ENCODE measurements at regions of chr16 and their contacts with region 1.

Region 1: DNA sequence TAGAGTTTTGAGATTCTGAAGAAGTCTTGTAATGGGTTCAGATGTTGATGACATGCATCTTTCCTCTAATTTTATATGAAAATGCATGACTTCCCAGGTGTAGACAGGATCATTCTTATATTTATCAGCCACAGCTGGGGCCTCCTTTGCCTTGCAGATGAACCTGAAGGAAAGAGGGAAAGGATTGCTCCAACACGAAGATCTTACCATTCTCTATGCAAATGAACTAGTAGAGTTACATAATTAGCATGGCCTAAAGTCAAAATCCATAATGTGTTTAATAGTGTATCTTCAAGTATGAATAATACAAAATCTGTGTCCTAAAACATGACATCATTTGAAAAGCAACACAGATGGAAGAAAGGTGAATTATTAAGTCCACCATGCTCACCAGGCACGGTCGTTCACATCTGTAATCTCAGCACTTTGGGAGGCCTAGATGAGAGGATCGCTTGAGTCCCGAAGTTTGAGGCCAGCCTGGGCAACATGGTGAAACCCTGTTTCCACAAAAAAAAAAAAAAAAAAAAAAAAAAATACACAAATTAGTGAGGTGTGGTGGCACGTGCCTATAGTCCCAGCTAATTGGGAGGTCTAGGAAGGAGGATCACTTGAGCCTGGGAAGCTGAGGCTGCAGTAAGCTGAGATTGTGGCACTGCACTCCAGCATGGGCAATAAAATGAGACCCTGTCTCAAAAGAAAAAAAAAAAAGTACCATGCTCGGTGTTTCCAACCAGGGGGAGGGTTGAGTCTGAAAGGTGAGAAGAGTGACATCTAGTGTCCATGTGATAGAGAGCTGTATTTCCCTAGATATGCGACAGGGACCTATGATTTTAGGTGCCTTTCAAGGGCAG is 6.3 kb downstream of the VWA3A start:
- DNase-seq: peak; percentile 27
- ATAC-seq: peak; percentile 84
- H3K4me3 Mint-ChIP-seq: no peak overlapping the region
- H3K27ac Mint-ChIP-seq: no peak overlapping the region
- H3K4me1 Mint-ChIP-seq: peaks cover 2% of the 10 kb centered on the region
- H3K27me3 Mint-ChIP-seq: peaks cover 8% of the 10 kb centered on the region

Region 2: GRCh38 chr16:22001591-22001990 is 97.0 kb before region 1 on chr16:
- CTCF ChIA-PET with region 1: interaction called, 18 read pairs
- POLR2A ChIA-PET with region 1: no interaction called
- DNase-seq: no peak
- ATAC-seq: no peak
- H3K4me3 Mint-ChIP-seq: no peak overlapping the region
- H3K27ac Mint-ChIP-seq: no peak overlapping the region
- H3K4me1 Mint-ChIP-seq: peaks cover 11% of the 10 kb centered on the region
- H3K27me3 Mint-ChIP-seq: no peaks in the 10 kb centered on the region

Region 3: DNA sequence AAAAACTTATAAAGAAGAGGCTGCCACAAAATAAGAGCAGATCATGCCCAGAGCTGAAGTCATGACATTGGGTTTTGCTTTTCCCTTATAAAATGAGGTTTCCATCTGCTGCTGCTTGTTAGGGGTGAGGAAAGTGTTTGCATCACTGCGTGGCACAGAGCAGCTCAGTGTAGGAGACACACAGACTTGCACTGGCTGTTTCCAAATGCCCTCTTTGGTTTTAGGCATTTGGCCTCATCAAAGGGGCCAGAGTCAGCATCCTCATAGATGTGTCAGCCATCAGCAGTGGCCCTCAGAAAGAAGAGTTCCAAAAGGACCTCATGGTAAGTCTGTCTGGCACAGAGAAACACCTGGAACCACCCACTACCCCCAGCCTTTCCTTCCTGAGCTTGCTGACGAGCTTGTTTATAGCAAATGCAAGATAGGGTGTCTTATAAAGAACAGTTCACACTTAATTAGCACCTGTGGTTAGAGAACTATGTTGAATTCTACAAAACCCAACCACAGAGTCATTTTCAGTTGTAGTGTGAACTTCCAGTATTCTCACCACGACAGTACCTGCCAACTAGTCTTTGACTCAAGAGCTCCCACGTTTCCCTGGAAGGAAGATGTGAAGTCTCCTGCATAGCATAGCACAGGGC is 10.7 kb after region 1 on chr16:
- CTCF ChIA-PET with region 1: interaction called, 12 read pairs
- POLR2A ChIA-PET with region 1: interaction called, 3 read pairs
- DNase-seq: no peak
- ATAC-seq: no peak
- H3K4me3 Mint-ChIP-seq: no peak overlapping the region
- H3K27ac Mint-ChIP-seq: no peak overlapping the region
- H3K4me1 Mint-ChIP-seq: peaks cover 8% of the 10 kb centered on the region
- H3K27me3 Mint-ChIP-seq: peaks cover 24% of the 10 kb centered on the region

Region 4: GRCh38 chr16:22117609-22118008 is 19.0 kb after region 1 on chr16:
- CTCF ChIA-PET with region 1: interaction called, 12 read pairs
- POLR2A ChIA-PET with region 1: no interaction called
- DNase-seq: no peak
- ATAC-seq: no peak
- H3K4me3 Mint-ChIP-seq: no peak overlapping the region
- H3K27ac Mint-ChIP-seq: no peak overlapping the region
- H3K4me1 Mint-ChIP-seq: no peaks in the 10 kb centered on the region
- H3K27me3 Mint-ChIP-seq: no peaks in the 10 kb centered on the region

Region 5: DNA sequence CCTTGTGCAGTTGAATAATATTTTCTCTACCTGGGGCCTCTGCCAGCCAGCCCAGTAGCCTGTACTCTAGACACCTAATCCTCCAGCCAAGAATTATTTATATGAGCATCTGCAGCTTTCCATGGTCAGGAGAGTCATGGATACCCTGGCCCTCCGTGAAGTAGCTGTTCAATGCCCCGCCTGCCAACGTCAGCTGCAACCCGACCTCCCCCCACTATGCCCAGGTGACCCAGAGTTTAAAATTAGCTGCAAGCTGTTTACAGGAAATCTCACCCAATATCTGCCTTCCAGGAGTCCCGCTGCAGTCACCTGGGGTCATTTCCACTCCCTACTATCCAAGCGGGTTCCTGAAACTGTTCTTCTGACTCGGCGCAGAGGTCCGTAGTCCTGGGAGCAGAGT is 76.0 kb after region 1 on chr16:
- CTCF ChIA-PET with region 1: no interaction called
- POLR2A ChIA-PET with region 1: no interaction called
- DNase-seq: no peak
- ATAC-seq: no peak
- H3K4me3 Mint-ChIP-seq: no peak overlapping the region
- H3K27ac Mint-ChIP-seq: no peak overlapping the region
- H3K4me1 Mint-ChIP-seq: no peaks in the 10 kb centered on the region
- H3K27me3 Mint-ChIP-seq: no peaks in the 10 kb centered on the region

Measured in activated CD8-positive, alpha-beta T cell treated with anti-CD3 and anti-CD28 coated beads, Interleukin-2, amount 10 ng/mL, durations not matched to agents 7 days and 5 days (primary cell).